ENCODE measurements at regions of chr9 and their contacts with region 1.

Region 1: DNA sequence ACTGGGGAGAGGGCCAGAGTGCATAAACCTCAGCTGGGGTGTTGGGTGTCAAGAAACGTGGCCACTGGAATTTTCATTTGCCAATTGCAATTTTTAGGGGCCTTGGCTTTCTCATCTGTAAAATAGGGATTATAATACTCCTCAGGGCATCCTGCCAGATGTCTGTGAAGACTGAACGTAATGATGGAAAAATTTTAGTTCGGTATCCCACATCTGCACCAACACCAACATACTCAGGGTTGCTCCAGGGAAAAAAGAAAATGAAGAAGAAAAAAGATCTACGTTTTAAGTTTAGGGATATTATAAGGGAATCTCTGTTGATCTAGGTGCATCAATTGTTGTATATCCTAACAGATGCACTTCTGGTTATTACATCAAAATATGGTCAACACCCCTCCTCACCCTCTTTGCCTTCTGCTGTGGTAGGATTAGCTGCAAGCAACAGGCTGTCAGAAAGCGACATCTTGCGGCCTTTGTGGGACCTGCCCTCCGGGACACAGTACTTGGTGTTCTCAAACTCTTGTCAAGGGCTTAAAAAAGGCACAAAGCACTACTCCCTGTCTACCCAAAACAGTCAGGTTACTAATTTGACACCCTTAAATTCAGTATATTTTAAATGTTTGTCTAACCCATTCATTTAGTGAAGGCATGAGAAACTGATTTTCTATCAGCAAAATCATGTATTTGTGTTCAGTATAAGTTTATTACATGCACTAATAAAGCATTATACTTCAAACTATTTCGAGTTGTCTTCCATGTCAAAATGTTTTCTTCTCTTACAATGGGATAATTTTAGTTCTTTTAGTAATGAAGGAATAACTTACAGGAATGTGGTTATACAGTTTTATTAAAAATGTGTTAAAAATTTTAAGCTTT is 8.3 kb upstream of the TBC1D2 start:
- DNase-seq: peak; percentile 93
- H3K4me3 Mint-ChIP-seq: no peak overlapping the region
- H3K27ac Mint-ChIP-seq: no peak overlapping the region
- H3K4me1 Mint-ChIP-seq: no peaks in the 10 kb centered on the region
- H3K27me3 Mint-ChIP-seq: no peaks in the 10 kb centered on the region

Region 2: GRCh38 chr9:98207606-98208005 is 56.1 kb before region 1 on chr9:
- CTCF ChIA-PET with region 1: interaction called, 44 read pairs
- intact Hi-C with region 1: loop called (anchors 1 kb)
- DNase-seq: no peak
- H3K4me3 Mint-ChIP-seq: no peak overlapping the region
- H3K27ac Mint-ChIP-seq: no peak overlapping the region
- H3K4me1 Mint-ChIP-seq: peaks cover 2% of the 10 kb centered on the region
- H3K27me3 Mint-ChIP-seq: no peaks in the 10 kb centered on the region

Region 3: DNA sequence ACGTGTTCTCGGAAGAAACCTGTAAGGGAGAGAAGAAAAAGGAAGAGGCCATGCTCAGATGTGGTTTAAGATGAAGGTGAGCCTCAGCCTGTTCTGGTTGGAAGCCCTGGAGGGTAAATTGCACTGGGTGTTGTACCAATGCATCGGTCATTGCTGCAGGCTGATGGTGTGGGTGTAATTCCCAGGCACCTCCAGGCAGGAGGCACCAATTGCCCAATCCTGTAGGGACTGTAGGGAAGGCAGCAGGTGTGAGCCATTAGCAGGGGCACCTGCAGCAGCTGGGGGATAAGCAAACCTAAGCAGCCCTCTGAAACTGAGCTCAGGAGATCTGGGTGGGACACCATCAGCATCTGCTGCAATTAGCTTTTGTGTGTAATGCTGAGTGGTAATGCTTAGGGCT is 181.8 kb after region 1 on chr9:
- CTCF ChIA-PET with region 1: no interaction called
- intact Hi-C with region 1: no loop called
- DNase-seq: no peak
- H3K4me3 Mint-ChIP-seq: no peak overlapping the region
- H3K27ac Mint-ChIP-seq: no peak overlapping the region
- H3K4me1 Mint-ChIP-seq: no peaks in the 10 kb centered on the region
- H3K27me3 Mint-ChIP-seq: no peaks in the 10 kb centered on the region

Region 4: DNA sequence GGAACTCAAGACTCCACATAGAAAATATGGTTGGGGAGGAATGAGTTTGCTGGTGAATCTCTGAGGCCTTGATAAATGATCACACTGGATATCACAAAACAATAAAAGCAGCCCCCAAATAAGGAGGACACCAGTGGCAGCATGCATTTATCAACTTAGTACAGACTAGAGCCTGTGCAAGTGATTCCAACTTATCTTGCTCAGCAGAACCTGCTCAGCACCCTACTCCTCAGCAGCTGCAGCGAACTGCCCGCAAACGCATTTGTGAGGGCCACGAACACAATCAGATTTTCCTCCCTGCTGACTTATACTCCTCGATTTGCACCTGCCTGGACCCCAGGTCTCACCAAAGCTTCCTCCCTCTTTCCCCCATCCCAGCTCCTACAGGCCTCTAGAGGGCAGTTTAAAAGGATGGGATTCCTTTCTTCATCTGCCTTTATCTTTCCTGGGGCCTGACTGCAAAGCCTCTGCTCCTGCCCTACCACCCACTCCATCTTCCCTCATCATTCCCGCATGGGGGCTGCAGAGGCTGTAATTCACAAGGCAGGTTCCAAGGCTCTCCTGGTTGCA is 491.4 kb after region 1 on chr9:
- CTCF ChIA-PET with region 1: no interaction called
- intact Hi-C with region 1: no loop called
- DNase-seq: no peak
- H3K4me3 Mint-ChIP-seq: no peak overlapping the region
- H3K27ac Mint-ChIP-seq: no peak overlapping the region
- H3K4me1 Mint-ChIP-seq: no peaks in the 10 kb centered on the region
- H3K27me3 Mint-ChIP-seq: no peaks in the 10 kb centered on the region